ENCODE measurements at regions of chr14 and their contacts with region 1.

Region 1: DNA sequence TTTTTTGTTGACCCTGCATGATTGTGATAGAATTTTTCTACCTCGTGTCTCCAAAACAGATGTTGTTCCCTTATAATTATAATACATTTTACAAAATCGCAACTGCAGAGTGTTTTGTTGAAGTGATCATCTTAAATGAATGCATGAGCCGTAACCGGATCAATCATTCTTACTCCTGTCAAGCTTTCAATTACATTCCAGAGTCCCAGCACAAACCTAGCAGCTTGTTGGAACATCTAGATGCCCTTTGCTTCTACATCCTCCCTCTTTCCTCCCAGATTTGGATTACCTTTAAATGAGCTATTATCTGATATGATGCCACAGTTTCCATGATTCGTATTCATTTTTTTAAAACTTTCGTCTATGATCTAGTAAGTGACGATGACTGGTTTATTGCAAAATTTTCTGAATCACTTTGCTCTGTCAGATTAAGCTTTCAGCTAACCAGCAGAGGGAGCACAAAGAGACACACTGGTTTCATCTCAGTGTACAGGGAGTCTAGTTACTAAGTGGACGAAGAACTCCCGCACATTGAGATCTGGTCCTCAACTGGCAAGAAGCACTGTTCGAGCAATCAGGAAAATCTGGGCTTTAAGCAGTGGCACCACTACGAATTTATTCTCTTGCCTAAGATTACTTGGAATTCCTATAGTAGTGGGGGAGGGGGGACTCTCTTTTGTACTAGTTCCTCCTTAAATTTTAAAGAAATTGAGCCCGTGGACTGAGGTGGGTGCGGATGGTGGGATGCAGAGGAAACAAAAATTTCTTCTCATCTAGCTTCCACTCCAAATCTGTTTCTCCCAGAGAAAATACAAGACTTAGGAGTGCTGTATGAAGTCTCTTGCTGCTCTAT is 40.9 kb downstream of the TSHR start:
- DNase-seq: peak; percentile 19
- H3K4me3 ChIP-seq: no peak overlapping the region
- H3K27me3 ChIP-seq: no peaks in the 10 kb centered on the region
- CTCF ChIP-seq: peak; percentile 76

Region 2: DNA sequence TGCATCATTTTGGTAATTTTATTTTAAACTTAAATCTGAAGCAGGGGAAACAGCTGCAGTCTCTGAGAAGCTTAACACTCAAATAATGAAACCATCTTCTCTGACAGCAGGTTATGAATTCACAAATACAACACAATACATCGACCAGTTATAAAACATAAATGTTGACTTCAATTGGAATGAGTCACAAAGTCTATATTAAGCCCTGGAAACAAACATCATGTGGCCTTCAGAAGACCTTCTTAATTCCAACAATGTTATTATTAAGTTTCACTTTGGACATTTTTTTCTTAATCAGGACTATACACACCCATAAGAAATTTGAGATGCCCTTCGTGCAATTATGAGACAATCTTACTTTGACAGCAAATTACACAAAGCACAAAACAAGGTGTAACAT is 123.6 kb before region 1 on chr14:
- CTCF ChIA-PET with region 1: no interaction called
- POLR2A ChIA-PET with region 1: no interaction called
- DNase-seq: no peak
- H3K4me3 ChIP-seq: no peak overlapping the region
- H3K27me3 ChIP-seq: no peaks in the 10 kb centered on the region
- CTCF ChIP-seq: no peak

Region 3: GRCh38 chr14:81051547-81051946 is 55.3 kb after region 1 on chr14:
- CTCF ChIA-PET with region 1: no interaction called
- POLR2A ChIA-PET with region 1: no interaction called
- DNase-seq: no peak
- H3K4me3 ChIP-seq: no peak overlapping the region
- H3K27me3 ChIP-seq: no peaks in the 10 kb centered on the region
- CTCF ChIP-seq: no peak

Region 4: DNA sequence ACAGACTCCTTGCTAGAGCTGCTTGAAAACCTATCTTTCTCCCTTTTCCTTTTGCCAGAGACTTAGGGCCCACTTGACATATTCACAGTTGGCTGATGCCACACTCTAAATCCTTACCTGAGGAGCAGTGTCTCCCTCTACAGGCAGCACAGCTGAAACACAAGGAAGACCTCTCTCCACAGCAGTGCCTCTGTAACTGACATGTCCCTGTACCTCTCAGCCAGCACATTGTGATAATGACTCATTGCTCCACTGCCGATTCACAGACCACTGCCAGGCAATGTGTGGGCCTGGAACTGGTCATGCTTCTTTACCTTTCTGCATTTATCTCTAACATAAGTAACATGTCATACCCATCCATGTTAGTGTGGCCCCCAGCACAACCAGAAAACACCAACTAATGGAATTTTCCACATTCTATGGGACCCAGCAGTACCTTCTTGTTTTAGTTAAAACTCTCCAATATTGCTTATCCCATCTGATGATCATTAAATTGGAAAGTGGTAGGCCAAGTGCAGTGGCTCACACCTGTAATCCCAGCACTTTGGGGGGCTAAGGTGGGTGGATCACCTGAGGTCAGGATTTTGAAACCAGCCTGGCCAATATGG is 168.0 kb after region 1 on chr14:
- CTCF ChIA-PET with region 1: interaction called, 39 read pairs
- POLR2A ChIA-PET with region 1: no interaction called
- DNase-seq: no peak
- H3K4me3 ChIP-seq: no peak overlapping the region
- H3K27me3 ChIP-seq: no peaks in the 10 kb centered on the region
- CTCF ChIP-seq: peak; percentile 64

Region 5: GRCh38 chr14:81170104-81170828 is 174.0 kb after region 1 on chr14:
- CTCF ChIA-PET with region 1: interaction called, 16 read pairs
- POLR2A ChIA-PET with region 1: no interaction called
- DNase-seq: peak; percentile 51
- H3K4me3 ChIP-seq: peak overlapping the region; percentile 52
- H3K27me3 ChIP-seq: no peaks in the 10 kb centered on the region
- CTCF ChIP-seq: peak; percentile 93